ENCODE measurements at regions of chr1 and their contacts with region 1.

Region 1: GRCh38 chr1:48870596-48870995 is 93.9 kb upstream of the BEND5 start:
- DNase-seq: peak; percentile 65
- H3K4me3 Mint-ChIP-seq: no peak overlapping the region
- H3K27ac Mint-ChIP-seq: peak overlapping the region; percentile 15
- H3K4me1 Mint-ChIP-seq: peaks cover 22% of the 10 kb centered on the region
- H3K27me3 Mint-ChIP-seq: no peaks in the 10 kb centered on the region
- CTCF ChIP-seq: peak; percentile 32

Region 2: DNA sequence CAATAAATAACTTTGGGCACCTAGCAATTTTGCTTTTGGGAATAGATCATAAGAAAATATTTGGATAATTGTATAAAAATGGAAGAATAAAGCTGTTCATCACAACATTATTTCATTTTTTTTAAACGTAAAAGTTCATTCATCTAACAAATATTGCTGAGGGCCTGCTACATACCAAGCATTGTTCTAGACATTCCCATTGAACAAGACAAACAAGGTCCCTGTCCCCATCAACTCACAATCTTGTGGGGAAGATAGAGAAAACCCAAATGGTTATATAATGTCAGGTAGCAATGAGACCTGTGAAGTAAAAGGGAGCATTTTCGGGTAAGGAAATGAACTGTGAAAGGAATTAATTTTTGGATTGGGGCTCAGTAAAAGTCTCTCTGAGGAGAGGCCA is 39.9 kb before region 1 on chr1:
- CTCF ChIA-PET with region 1: interaction called, 11 read pairs
- POLR2A ChIA-PET with region 1: no interaction called
- intact Hi-C with region 1: no loop called
- DNase-seq: no peak
- H3K4me3 Mint-ChIP-seq: no peak overlapping the region
- H3K27ac Mint-ChIP-seq: no peak overlapping the region
- H3K4me1 Mint-ChIP-seq: peaks cover 4% of the 10 kb centered on the region
- H3K27me3 Mint-ChIP-seq: no peaks in the 10 kb centered on the region
- CTCF ChIP-seq: no peak

Region 3: GRCh38 chr1:49356594-49356993 is 486.0 kb after region 1 on chr1:
- CTCF ChIA-PET with region 1: no interaction called
- POLR2A ChIA-PET with region 1: no interaction called
- intact Hi-C with region 1: no loop called
- DNase-seq: no peak
- H3K4me3 Mint-ChIP-seq: no peak overlapping the region
- H3K27ac Mint-ChIP-seq: no peak overlapping the region
- H3K4me1 Mint-ChIP-seq: peaks cover 10% of the 10 kb centered on the region
- H3K27me3 Mint-ChIP-seq: no peaks in the 10 kb centered on the region
- CTCF ChIP-seq: no peak

Measured in MCF 10A (cell line).